ENCODE measurements at regions of chr9 and their contacts with region 1.

Region 1: DNA sequence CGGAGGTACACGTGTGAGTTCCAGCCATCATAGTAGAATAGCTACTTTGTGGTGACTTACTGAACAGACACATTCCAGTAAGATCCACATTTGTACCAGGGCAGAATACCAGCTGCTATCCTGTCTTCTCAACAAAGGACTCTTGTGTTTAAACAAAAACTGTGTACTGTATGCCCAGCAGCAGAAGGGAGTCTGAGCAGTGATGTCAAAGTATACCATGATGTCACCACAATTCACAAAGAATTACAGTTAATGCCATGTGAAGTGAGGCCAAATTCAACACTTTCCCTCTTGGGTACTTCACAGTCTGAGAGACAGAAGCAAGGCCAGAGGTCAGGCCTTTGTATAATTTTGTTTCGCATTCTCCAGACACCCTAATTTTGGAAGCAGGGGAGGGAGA is 137.0 kb downstream of the ADAMTSL1 start:
- DNase-seq: no peak
- ATAC-seq: no peak
- H3K4me3 ChIP-seq: no peak overlapping the region
- H3K27ac ChIP-seq: no peak overlapping the region
- H3K4me1 ChIP-seq: no peaks in the 10 kb centered on the region
- H3K27me3 ChIP-seq: no peaks in the 10 kb centered on the region
- CTCF ChIP-seq: no peak
- EP300 ChIP-seq: no peak
- POLR2A ChIP-seq: no peak
- RAD21 ChIP-seq: no peak

Region 2: GRCh38 chr9:18555105-18555883 is 55.7 kb before region 1 on chr9:
- CTCF ChIA-PET with region 1: no interaction called
- POLR2A ChIA-PET with region 1: no interaction called
- in situ Hi-C with region 1: loop called (anchors 10 kb)
- intact Hi-C with region 1: no loop called
- DNase-seq: no peak
- ATAC-seq: no peak
- H3K4me3 ChIP-seq: no peak overlapping the region
- H3K27ac ChIP-seq: no peak overlapping the region
- H3K4me1 ChIP-seq: no peaks in the 10 kb centered on the region
- H3K27me3 ChIP-seq: no peaks in the 10 kb centered on the region
- CTCF ChIP-seq: no peak
- EP300 ChIP-seq: no peak
- POLR2A ChIP-seq: no peak
- RAD21 ChIP-seq: no peak

Region 3: GRCh38 chr9:18692268-18692667 is 81.3 kb after region 1 on chr9:
- CTCF ChIA-PET with region 1: no interaction called
- POLR2A ChIA-PET with region 1: no interaction called
- in situ Hi-C with region 1: no loop called
- intact Hi-C with region 1: no loop called
- DNase-seq: no peak
- ATAC-seq: no peak
- H3K4me3 ChIP-seq: no peak overlapping the region
- H3K27ac ChIP-seq: no peak overlapping the region
- H3K4me1 ChIP-seq: no peaks in the 10 kb centered on the region
- H3K27me3 ChIP-seq: no peaks in the 10 kb centered on the region
- CTCF ChIP-seq: no peak
- EP300 ChIP-seq: no peak
- POLR2A ChIP-seq: no peak
- RAD21 ChIP-seq: no peak